ENCODE measurements at regions of chr13 and their contacts with region 1.

Region 1: GRCh38 chr13:79541426-79542049 is 60.6 kb downstream of the NDFIP2 start:
- DNase-seq: no peak
- H3K4me3 ChIP-seq: no peak overlapping the region
- H3K27ac ChIP-seq: no peak overlapping the region
- H3K4me1 ChIP-seq: no peaks in the 10 kb centered on the region
- H3K27me3 ChIP-seq: no peaks in the 10 kb centered on the region
- CTCF ChIP-seq: peak in 3 of 4 experiments; percentile 63 to 76 (median 74)
- EP300 ChIP-seq: no peak
- POLR2A ChIP-seq: no peak

Region 2: DNA sequence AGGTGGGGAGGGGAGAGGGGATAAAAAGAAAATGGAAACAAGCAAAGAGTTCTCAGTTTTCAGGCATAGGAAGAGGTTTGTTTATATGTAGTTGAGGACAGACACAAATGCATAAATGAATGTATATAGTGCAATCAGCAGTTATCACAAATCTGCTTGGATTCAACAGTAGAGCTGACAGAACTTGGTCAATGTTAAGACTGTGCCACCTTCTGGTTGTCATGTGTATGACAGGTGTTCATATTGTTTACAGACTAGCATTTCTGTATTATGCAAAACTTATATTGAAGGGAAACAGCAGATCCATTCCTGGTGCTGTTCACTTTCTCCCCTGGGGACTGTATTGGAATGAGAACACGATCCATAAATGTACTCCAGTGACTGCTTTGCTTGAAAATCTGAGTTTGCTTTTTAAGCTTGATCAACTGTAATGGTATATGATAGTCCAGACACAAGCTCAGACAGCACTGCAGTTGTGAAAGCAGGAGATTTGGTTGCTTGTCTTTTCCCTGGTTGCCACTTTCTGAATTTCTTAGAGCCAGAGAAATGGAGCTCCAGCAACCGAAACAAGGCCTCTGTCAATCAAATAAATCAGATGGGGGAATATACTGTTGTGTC is 563.0 kb before region 1 on chr13:
- intact Hi-C with region 1: no loop called
- DNase-seq: no peak
- H3K4me3 ChIP-seq: no peak overlapping the region
- H3K27ac ChIP-seq: no peak overlapping the region
- H3K4me1 ChIP-seq: no peaks in the 10 kb centered on the region
- H3K27me3 ChIP-seq: no peaks in the 10 kb centered on the region
- CTCF ChIP-seq: peak in 3 of 4 experiments; percentile 46 to 55 (median 47)
- EP300 ChIP-seq: no peak
- POLR2A ChIP-seq: no peak

Region 3: DNA sequence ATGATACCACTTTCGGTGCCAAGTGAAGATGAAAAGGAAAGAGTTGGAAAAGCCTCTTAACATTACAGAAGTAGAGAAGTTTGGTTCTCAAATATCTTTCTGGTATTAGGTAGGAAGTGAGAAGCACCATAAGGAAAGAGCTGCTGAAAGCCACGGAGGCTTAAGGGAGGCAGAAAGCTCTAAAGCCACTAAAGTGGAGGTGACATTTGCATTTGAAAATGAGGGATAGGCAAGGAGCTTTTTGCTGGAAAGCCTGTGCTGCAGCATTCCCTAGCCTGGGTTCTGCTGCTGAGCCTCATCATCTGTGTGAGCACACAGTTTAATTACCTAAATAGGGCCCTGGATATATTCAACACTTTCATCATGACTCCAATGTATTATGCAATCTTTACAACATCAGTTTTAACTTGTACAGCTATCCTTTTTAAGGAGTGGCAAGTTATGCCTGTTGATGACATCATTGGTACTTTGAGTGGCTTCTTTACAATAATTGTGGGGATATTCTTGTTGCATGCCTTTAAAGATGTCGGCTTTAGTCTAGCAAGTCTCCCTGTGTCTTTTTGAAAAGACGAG is 450.9 kb before region 1 on chr13:
- intact Hi-C with region 1: no loop called
- DNase-seq: no peak
- H3K4me3 ChIP-seq: no peak overlapping the region
- H3K27ac ChIP-seq: no peak overlapping the region
- H3K4me1 ChIP-seq: no peaks in the 10 kb centered on the region
- H3K27me3 ChIP-seq: no peaks in the 10 kb centered on the region
- CTCF ChIP-seq: no peak
- EP300 ChIP-seq: no peak
- POLR2A ChIP-seq: no peak

Region 4: DNA sequence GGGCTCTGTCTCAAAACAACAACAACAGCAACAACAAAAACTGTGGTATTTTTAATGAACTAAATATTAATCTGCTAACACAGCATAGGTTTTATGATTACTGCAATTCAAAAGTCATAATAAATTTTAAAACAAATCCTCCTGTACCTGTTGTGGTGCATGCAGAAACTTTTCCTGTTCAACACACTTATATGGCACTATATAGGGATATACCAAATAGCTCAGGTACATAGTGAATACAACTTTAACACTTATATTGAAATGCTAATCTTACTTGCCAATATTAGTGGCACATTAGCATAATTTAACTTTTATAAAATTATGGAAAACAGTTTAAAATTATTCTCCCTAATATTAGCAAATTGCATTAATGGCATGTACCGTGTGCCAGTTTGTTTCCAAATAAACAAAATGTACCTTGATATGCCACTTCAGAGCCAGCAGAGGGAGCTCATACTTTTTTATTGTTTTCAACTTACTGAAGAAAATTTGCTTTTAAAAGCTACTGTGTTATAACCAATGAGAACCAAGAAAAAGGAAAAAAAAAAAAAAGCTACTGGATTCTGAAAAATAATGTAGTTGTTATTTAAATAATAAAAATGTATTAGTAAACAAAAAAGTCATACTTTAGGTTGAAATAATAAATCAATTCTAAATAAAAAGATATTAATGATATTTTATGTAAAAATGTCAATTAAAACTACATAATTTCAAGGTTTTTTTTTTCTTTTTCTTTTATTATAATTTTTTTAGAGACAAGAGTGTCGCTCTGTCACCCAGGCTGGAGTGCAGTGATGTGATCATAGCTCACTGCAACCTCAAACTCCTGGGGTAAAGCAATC is 117.5 kb before region 1 on chr13:
- intact Hi-C with region 1: loop called (anchors 1 kb)
- DNase-seq: no peak
- H3K4me3 ChIP-seq: no peak overlapping the region
- H3K27ac ChIP-seq: no peak overlapping the region
- H3K4me1 ChIP-seq: no peaks in the 10 kb centered on the region
- H3K27me3 ChIP-seq: no peaks in the 10 kb centered on the region
- CTCF ChIP-seq: peak; percentile 18 to 56 (median 51)
- EP300 ChIP-seq: no peak
- POLR2A ChIP-seq: no peak

Measured in sigmoid colon (tissue), 7 donors.